Esophagus squamous epithelium (tissue), 5 donors: ENCODE measurements at regions of chr2 and their contacts with region 1.

Region 1: DNA sequence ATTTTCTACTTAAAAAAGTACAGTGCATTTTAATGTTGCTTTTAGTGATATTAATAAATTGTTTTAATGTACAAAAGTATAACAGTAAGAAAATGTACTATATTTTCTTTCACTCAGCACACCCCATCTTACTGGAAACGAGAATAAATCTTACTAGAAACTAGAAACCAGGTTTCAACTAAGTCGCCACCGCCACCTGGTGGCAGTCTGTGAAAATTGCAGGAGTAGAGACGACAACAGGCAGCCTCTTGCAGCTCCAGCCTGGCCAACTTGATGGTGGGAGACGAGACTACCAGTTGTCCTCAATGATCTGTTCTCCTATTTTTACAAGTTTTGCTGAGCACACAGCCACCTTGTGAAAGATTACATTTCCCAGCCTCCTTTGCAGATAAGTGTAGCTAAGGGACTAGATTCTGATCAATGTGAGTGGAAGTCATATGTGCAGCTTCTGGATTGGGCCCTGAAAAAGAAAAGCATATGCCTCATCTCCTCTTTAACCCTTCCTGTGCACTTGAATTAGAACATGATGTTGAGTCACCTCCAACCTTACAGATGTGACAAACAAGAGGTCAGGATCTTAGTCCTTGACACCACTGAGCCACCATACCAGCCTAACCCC is 8.7 kb downstream of the OTOF start:
- DNase-seq: no peak
- H3K4me3 ChIP-seq: no peak overlapping the region
- H3K27ac ChIP-seq: no peak overlapping the region
- H3K4me1 ChIP-seq: no peaks in the 10 kb centered on the region
- H3K27me3 ChIP-seq: no peaks in the 10 kb centered on the region
- CTCF ChIP-seq: peak; percentile 27 to 83 (median 58)
- POLR2A ChIP-seq: no peak

Region 2: GRCh38 chr2:26327291-26328272 is 141.6 kb before region 1 on chr2:
- intact Hi-C with region 1: loop called (anchors 10 kb)
- DNase-seq: no peak
- H3K4me3 ChIP-seq: no peak overlapping the region
- H3K27ac ChIP-seq: no peak overlapping the region
- H3K4me1 ChIP-seq: peaks cover 0 to 7% (median 0%) of the 10 kb centered on the region in 3 donors
- H3K27me3 ChIP-seq: no peaks in the 10 kb centered on the region
- CTCF ChIP-seq: no peak
- POLR2A ChIP-seq: no peak

Region 3: DNA sequence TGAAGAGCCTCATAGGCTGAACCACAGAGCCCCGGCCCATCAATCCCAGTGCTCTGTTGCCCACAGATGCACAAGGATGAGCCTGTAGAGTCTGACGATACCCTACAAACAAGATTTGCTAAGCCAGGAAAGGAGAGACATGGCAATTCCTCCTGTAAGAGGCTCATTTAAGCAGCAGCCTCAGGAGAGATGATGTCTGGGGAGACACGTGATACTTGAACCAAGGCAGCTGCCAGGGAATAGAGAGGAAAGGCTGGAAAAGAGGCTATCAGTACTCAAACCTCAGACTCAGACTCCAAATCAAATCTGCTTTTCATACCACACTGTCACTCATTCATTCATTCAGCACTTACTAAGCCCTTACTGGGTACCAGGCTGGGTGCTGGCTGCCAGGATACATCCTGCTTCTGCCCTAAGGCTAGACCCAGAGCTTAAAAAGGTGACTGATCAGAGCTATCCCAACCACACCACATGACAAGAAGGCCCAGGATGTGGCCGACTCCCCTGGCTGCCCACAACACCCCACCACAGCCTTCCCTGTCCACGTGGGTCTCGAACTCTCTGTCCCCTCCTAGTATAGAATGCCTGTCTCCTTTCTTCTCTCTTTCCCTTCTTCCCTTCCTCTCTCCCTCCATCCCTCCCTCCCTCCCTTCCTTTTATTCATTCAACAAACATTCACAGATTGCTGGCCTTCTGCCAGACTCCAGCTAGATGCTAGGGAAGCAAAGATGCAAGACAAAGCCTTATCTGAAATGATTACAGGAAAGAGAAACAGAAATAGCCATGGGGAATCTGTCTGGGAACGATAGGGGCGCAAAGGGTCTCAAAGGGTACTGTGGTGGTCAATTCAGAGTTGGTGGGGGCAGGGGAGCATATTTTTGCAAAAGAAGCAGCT is 199.9 kb after region 1 on chr2:
- intact Hi-C with region 1: no loop called
- DNase-seq: no peak
- H3K4me3 ChIP-seq: no peak overlapping the region
- H3K27ac ChIP-seq: no peak overlapping the region
- H3K4me1 ChIP-seq: no peaks in the 10 kb centered on the region
- H3K27me3 ChIP-seq: peaks cover 0 to 61% (median 0%) of the 10 kb centered on the region in 4 donors
- CTCF ChIP-seq: no peak
- POLR2A ChIP-seq: no peak